Right cardiac atrium (tissue), 5 donors: ENCODE measurements at regions of chr16 and their contacts with region 1.

Region 1: GRCh38 chr16:527006-527753 is at the start of gene CAPN15:
- DNase-seq: peak; percentile 91 to 96 (median 96)
- ATAC-seq: peak; percentile 89 to 92
- H3K4me3 ChIP-seq: peak within 1 kb of the TSS; percentile 86
- H3K27ac ChIP-seq: peak within 1 kb of the TSS; percentile 95
- H3K4me1 ChIP-seq: peaks cover 18% of the 10 kb centered on the region
- H3K27me3 ChIP-seq: no peaks in the 10 kb centered on the region
- total RNA-seq, gene CAPN15: 15.4 to 22.1 (median 19.6) TPM

Region 2: GRCh38 chr16:53346-54236 is 473.6 kb before region 1 on chr16 and contains the starts of genes POLR3K and SNRNP25:
- intact Hi-C with region 1: no loop called
- DNase-seq: peak; percentile 99 to 100 (median 100)
- ATAC-seq: peak; percentile 96
- H3K4me3 ChIP-seq: peak within 1 kb of the TSS; percentile 64
- H3K27ac ChIP-seq: peak within 1 kb of the TSS; percentile 76
- H3K4me1 ChIP-seq: no peaks in the 10 kb centered on the region
- H3K27me3 ChIP-seq: no peaks in the 10 kb centered on the region
- total RNA-seq, gene POLR3K: 9.8 to 13.4 (median 11.6) TPM
- total RNA-seq, gene SNRNP25: 54.8 to 71.4 (median 62.3) TPM

Region 3: GRCh38 chr16:397736-398332 is 129.3 kb before region 1 on chr16:
- intact Hi-C with region 1: loop called in 1 of 4 experiments (anchors 5 kb)
- DNase-seq: peak; percentile 72 to 91 (median 90)
- ATAC-seq: peak; percentile 18 to 34
- H3K4me3 ChIP-seq: no peak overlapping the region
- H3K27ac ChIP-seq: peak overlapping the region; percentile 14
- H3K4me1 ChIP-seq: no peaks in the 10 kb centered on the region
- H3K27me3 ChIP-seq: no peaks in the 10 kb centered on the region